ENCODE measurements at regions of chr9 and their contacts with region 1.

Region 1: GRCh38 chr9:114397848-114398605 is 10.2 kb upstream of the AKNA start:
- DNase-seq: peak; percentile 97
- ATAC-seq: peak; percentile 93
- H3K4me3 Mint-ChIP-seq: peak overlapping the region; percentile 99
- H3K27ac Mint-ChIP-seq: peak overlapping the region; percentile 79
- H3K4me1 Mint-ChIP-seq: peaks cover 40% of the 10 kb centered on the region
- H3K27me3 Mint-ChIP-seq: no peaks in the 10 kb centered on the region

Region 2: DNA sequence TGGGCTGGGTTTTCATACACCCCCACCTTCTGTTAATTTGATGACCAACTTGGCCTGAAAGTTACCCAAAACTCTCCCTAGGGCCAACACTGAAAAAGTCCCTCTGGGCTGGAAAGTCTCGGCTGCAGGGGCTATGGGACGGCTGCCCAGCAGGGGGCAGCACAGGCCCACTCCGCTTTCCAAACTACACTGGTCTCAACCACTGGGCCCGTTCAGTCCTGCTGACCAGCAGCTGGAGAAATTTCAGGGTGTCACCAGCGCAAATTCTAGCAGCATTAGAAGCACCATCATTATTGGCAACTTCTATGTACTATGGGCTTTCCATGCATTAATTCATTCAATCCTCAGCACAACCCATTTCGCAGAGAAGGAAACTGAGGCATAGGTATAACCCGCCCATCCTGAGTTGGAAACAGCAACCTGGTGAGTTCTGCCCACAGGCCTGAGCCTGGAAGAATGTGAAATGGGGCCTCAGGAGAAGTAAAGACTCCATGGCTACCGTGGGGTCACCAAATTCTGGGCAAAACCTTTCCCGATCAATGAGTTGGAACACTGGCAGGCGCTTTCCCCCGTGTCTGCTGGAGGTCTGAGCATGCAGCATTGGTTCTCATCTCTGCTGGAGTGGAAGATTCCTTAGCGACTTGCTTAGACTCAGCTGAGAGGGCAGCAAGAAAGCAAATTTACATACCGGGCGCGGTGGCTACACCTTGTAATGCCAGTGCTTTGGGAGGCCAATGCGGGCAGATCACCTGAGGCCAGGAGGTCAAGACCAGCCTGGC is 58.7 kb before region 1 on chr9:
- CTCF ChIA-PET with region 1: interaction called, 10 read pairs
- DNase-seq: peak; percentile 61
- ATAC-seq: peak; percentile 63
- H3K4me3 Mint-ChIP-seq: no peak overlapping the region
- H3K27ac Mint-ChIP-seq: peak overlapping the region; percentile 36
- H3K4me1 Mint-ChIP-seq: peaks cover 19% of the 10 kb centered on the region
- H3K27me3 Mint-ChIP-seq: no peaks in the 10 kb centered on the region